Cardiac septum (tissue), 1 donor: ENCODE measurements at regions of chr3 and their contacts with region 1.

Region 1: GRCh38 chr3:170221924-170222646 is at the start of gene PRKCI:
- DNase-seq: peak; percentile 97
- total RNA-seq, gene PRKCI: 14.3 TPM

Region 2: GRCh38 chr3:170180908-170181879 is 40.9 kb before region 1 on chr3 and contains the start of gene PHC3:
- intact Hi-C with region 1: loop called (anchors 5 kb)
- DNase-seq: peak; percentile 95
- total RNA-seq, gene PHC3: 57.0 TPM

Region 3: DNA sequence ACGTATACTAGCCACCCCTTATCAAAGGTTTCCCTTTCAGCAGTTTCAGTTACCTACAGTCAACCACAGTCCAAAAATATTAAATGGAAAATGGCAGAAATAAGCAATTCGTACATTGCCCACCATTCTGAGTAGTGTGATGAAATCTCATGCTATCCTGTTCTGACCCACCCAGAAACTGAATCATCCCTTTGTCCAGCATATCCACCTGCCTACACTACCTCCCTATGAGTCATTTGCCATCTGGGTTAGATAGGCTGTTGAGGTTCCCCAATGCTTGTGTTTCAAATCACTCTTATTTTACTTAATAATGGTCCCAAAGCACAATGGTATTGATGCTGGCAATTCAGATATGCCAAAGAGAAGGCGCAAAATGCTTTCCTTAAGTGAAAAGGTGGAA is 25.3 kb before region 1 on chr3:
- intact Hi-C with region 1: no loop called
- DNase-seq: no peak

Region 4: DNA sequence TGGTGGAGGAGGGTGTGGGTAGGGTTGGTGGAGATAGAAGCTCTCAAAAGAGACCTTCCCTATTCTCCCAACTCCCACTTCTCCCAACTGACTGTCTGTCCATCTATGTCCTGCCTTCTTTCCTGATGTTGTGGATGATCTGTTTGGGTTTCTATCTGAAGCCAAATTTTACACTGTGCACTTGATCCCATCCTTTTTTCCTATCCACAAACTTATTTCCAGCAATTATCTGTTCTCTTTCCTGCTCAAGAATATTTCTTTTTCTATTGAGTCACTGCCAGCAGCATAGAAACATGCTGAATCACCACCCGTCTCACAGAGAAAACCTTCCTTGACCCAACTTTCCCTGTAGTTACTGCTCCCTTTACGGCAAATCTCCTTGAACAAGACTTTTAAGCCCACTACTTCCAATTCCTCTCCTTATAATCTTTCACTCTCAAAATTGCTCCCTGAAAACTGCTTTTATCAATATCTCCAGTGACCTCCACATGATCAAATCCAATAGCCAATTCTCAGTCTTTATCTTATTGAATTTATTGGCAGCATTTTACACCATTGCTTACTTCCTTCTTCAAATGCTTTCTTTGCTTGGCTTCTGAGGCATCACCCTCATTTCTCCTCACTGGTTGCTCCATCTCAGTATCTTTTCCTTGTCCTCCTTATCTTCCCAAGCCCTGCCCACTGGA is 505.0 kb after region 1 on chr3:
- intact Hi-C with region 1: no loop called
- DNase-seq: no peak